ENCODE measurements at regions of chr2 and their contacts with region 1.

Region 1: GRCh38 chr2:119407430-119408220 is 24.0 kb upstream of the TMEM37 start:
- DNase-seq: peak; percentile 64
- H3K4me3 Mint-ChIP-seq: no peak overlapping the region
- H3K27ac Mint-ChIP-seq: no peak overlapping the region
- H3K4me1 Mint-ChIP-seq: peaks cover 6% of the 10 kb centered on the region
- H3K27me3 Mint-ChIP-seq: no peaks in the 10 kb centered on the region
- CTCF ChIP-seq: peak; percentile 66

Region 2: DNA sequence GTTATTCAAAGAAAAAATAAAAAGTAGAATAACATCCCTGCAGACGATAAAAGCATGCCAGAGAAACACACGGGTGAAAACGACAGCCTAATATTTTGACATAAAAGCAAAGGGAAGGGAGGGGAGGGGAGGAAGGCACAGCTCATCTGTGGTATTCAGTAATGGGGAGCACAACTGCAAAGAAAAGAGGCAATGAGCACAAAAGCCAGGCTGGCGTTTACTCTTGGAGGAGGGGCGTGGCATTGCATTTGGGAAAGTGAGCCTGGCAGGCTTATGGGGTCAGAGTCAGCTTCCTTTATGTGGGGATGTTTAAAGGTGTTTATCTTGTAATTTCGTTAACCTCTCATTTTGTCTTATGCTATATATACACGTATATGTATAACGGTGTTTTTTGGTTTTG is 130.8 kb before region 1 on chr2:
- CTCF ChIA-PET with region 1: no interaction called
- POLR2A ChIA-PET with region 1: no interaction called
- intact Hi-C with region 1: no loop called
- DNase-seq: no peak
- H3K4me3 Mint-ChIP-seq: no peak overlapping the region
- H3K27ac Mint-ChIP-seq: no peak overlapping the region
- H3K4me1 Mint-ChIP-seq: no peaks in the 10 kb centered on the region
- H3K27me3 Mint-ChIP-seq: no peaks in the 10 kb centered on the region
- CTCF ChIP-seq: no peak

Region 3: DNA sequence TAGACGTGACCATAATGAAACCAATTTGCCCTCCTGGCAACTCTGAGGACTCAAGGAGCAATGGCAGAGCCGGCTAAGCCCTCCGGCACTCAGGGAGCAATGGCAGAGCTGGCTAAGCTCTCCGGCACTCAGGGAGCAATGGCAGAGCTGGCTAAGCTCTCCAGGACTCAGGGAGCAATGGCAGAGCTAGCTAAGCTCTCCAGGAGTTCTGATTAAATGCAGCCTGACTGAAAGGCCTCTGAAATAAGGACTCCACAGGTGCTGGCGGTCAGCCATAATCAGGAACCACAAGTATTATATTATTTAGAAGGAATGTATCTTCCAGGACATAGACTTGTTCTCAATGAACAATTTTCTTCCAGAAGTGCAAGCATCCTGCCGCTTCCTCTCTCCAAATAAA is 106.2 kb before region 1 on chr2:
- CTCF ChIA-PET with region 1: no interaction called
- POLR2A ChIA-PET with region 1: no interaction called
- intact Hi-C with region 1: no loop called
- DNase-seq: no peak
- H3K4me3 Mint-ChIP-seq: no peak overlapping the region
- H3K27ac Mint-ChIP-seq: no peak overlapping the region
- H3K4me1 Mint-ChIP-seq: no peaks in the 10 kb centered on the region
- H3K27me3 Mint-ChIP-seq: no peaks in the 10 kb centered on the region
- CTCF ChIP-seq: no peak

Region 4: DNA sequence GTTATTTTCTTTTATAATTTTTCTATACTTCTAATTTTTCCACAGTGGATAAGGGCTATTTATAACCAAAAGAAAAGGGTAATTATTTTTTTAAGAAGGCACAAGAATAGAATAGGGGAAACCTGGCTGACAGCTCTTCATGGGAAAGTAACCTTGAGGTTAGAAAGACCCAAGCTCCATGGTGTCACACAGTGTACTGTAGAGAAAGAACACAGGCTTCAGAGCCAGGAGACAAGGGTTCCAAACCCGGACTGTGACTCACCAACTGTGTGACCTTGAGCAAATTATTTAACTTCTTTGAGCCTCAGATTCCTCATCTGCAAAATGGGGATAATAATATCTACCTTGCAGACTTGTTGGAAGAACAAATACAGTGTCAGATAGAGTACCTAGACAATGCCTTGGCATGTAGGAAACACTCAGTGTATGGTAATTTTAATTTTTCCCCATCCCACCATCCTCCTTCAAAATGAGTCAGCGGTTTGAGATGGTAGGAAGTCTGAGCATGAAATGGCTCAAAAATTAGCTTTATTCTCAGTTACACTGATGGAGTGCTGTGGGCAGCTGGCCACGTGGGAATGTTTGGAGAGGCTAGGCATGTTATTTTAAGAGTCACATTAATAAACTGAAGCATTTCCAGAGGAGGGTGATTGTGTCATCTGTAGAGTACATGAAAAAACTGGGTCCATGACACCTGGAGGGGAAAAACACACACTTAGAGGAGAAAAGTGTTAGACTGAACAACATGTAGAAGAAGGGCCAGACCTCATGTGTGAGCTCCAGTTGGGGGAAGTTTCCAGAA is 60.7 kb after region 1 on chr2:
- CTCF ChIA-PET with region 1: interaction called, 13 read pairs
- POLR2A ChIA-PET with region 1: no interaction called
- intact Hi-C with region 1: no loop called
- DNase-seq: peak; percentile 18
- H3K4me3 Mint-ChIP-seq: no peak overlapping the region
- H3K27ac Mint-ChIP-seq: no peak overlapping the region
- H3K4me1 Mint-ChIP-seq: peaks cover 6% of the 10 kb centered on the region
- H3K27me3 Mint-ChIP-seq: no peaks in the 10 kb centered on the region
- CTCF ChIP-seq: no peak

Measured in MCF 10A (cell line).